HepG2 (cell line): ENCODE measurements at regions of chr16 and their contacts with region 1.

Region 1: GRCh38 chr16:56851671-56852400 is 13.2 kb upstream of the SLC12A3 start:
- DNase-seq: peak; percentile 35
- ATAC-seq: no peak
- H3K4me3 ChIP-seq: no peak overlapping the region
- H3K27ac ChIP-seq: peak overlapping the region; percentile 7
- H3K4me1 ChIP-seq: peaks cover 78% of the 10 kb centered on the region
- H3K27me3 ChIP-seq: no peaks in the 10 kb centered on the region
- CTCF ChIP-seq: peak; percentile 53
- EP300 ChIP-seq: no peak
- POLR2A ChIP-seq: no peak
- RAD21 ChIP-seq: peak; percentile 53; the same call in 1 of the 2 replicates

Region 2: GRCh38 chr16:56576585-56577293 is 275.1 kb before region 1 on chr16:
- CTCF ChIA-PET with region 1: no interaction called
- POLR2A ChIA-PET with region 1: no interaction called
- in situ Hi-C with region 1: no loop called
- intact Hi-C with region 1: loop called (anchors 1 kb)
- DNase-seq: peak; percentile 69
- ATAC-seq: peak; percentile 100
- H3K4me3 ChIP-seq: no peak overlapping the region
- H3K27ac ChIP-seq: no peak overlapping the region
- H3K4me1 ChIP-seq: no peaks in the 10 kb centered on the region
- H3K27me3 ChIP-seq: peaks cover 0 to 3% of the 10 kb centered on the region in 2 experiments; a peak in 2 of 5 replicates
- CTCF ChIP-seq: peak; percentile 99
- EP300 ChIP-seq: no peak
- POLR2A ChIP-seq: no peak
- RAD21 ChIP-seq: peak; percentile 93

Region 3: GRCh38 chr16:56836410-56837230 is 15.2 kb before region 1 on chr16:
- CTCF ChIA-PET with region 1: interaction called, 4 read pairs
- POLR2A ChIA-PET with region 1: interaction called, 44 read pairs
- in situ Hi-C with region 1: no loop called
- intact Hi-C with region 1: loop called (anchors 1 kb)
- DNase-seq: no peak
- ATAC-seq: no peak
- H3K4me3 ChIP-seq: no peak overlapping the region
- H3K27ac ChIP-seq: peak overlapping the region; percentile 19
- H3K4me1 ChIP-seq: peaks cover 67% of the 10 kb centered on the region
- H3K27me3 ChIP-seq: no peaks in the 10 kb centered on the region
- CTCF ChIP-seq: no peak
- EP300 ChIP-seq: no peak
- POLR2A ChIP-seq: no peak
- RAD21 ChIP-seq: no peak